OCI-LY7 (cell line): ENCODE measurements at regions of chr6 and their contacts with region 1.

Region 1: GRCh38 chr6:67933278-67933677 is 701.8 kb upstream of the ADGRB3 start:
- DNase-seq: peak; percentile 11
- H3K4me3 ChIP-seq: no peak overlapping the region
- H3K27ac ChIP-seq: no peak overlapping the region
- H3K4me1 ChIP-seq: no peaks in the 10 kb centered on the region
- CTCF ChIP-seq: peak; percentile 60

Region 2: GRCh38 chr6:68196645-68197044 is 263.4 kb after region 1 on chr6:
- CTCF ChIA-PET with region 1: no interaction called
- POLR2A ChIA-PET with region 1: interaction called, 3 read pairs
- intact Hi-C with region 1: loop called (anchors 2 kb)
- DNase-seq: peak; percentile 48
- H3K4me3 ChIP-seq: no peak overlapping the region
- H3K27ac ChIP-seq: no peak overlapping the region
- H3K4me1 ChIP-seq: no peaks in the 10 kb centered on the region
- CTCF ChIP-seq: peak; percentile 71

Region 3: DNA sequence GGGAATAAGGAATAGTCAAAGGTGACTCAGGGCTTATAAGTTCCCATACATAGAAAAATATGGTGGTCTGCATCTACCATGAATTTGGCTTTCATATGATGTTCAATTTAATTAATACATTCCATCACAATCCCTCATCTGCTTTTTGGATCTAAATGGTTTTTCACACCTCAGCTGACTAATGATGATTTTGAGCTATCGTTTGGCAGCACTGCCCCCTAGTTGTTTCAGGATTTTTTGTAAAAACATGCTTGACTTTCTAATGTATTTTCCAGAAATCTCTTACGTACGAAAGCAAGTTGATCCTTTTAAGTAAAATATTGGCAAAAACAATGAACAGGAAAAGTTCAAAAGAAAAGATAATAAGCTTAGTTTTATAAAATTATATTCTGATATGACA is 293.2 kb after region 1 on chr6:
- CTCF ChIA-PET with region 1: no interaction called
- POLR2A ChIA-PET with region 1: no interaction called
- intact Hi-C with region 1: loop called (anchors 5 kb)
- DNase-seq: peak; percentile 7
- H3K4me3 ChIP-seq: no peak overlapping the region
- H3K27ac ChIP-seq: no peak overlapping the region
- H3K4me1 ChIP-seq: no peaks in the 10 kb centered on the region
- CTCF ChIP-seq: peak; percentile 74